Motor neuron (in vitro differentiated cells): ENCODE measurements at regions of chr3 and their contacts with region 1.

Region 1: GRCh38 chr3:141913150-141913811 is 36.8 kb downstream of the ATP1B3 start:
- ATAC-seq: peak in 3 of 8 experiments; percentile 69 to 72 (median 70)
- H3K4me3 ChIP-seq: no peak overlapping the region
- H3K27ac ChIP-seq: no peak overlapping the region
- H3K4me1 ChIP-seq: no peaks in the 10 kb centered on the region

Region 2: GRCh38 chr3:141738022-141738890 is 175.0 kb before region 1 on chr3 and contains the start of gene RNF7:
- in situ Hi-C with region 1: loop called in 1 of 9 experiments (anchors 25 kb)
- ATAC-seq: peak; percentile 92 to 97 (median 96)
- H3K4me3 ChIP-seq: peak within 1 kb of the TSS; percentile 69 to 88 (median 72)
- H3K27ac ChIP-seq: peak within 1 kb of the TSS; percentile 89 to 97
- H3K4me1 ChIP-seq: peaks cover 8 to 20% of the 10 kb centered on the region in 2 donors
- total RNA-seq, gene RNF7: 70.5 to 140 (median 91.8) TPM